Right ventricle myocardium inferior (tissue), 1 donor: ENCODE measurements at regions of chr15 and their contacts with region 1.

Region 1: DNA sequence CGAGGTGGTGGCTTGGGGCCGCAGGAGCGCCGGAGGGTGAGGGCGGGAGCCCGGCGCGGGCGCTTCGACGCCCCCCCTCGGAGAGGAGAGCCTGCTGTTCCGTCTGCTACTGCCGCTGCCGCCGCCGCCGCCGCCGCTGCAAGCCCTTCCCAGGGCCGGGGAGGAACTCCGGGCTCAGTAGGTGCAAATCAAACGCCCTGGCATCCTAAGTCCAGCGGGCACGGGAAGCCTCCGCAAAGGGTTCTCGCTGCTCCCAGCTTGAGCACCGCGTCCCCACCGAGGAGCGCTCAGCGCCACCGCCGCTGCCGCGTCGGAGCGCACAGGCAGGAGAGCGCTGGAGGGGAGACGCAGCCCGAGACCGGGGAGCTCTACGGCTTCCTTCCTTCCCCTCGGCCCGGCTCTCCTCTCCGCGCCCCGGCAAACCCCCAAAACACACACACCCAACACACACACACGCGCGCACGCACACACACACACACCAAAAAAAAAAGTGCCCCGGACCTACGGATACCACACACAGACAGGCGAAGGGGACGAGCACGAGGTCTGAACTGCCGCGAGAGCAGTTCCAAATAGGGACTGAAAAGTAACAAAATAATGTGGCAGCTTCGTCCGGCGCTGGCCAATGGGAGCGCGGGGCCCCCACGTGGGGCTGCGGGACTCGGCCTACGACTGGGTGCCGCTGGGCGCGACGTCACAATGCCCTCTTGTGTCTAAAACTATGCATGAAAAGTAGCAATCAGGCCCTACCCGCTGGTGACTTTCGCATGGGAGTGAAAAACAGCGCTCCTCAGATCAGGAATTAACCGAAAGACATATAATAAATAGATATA is at the start of gene TLE3:
- DNase-seq: peak; percentile 100
- ATAC-seq: peak; percentile 70
- total RNA-seq, gene TLE3: 14.1 TPM

Region 2: DNA sequence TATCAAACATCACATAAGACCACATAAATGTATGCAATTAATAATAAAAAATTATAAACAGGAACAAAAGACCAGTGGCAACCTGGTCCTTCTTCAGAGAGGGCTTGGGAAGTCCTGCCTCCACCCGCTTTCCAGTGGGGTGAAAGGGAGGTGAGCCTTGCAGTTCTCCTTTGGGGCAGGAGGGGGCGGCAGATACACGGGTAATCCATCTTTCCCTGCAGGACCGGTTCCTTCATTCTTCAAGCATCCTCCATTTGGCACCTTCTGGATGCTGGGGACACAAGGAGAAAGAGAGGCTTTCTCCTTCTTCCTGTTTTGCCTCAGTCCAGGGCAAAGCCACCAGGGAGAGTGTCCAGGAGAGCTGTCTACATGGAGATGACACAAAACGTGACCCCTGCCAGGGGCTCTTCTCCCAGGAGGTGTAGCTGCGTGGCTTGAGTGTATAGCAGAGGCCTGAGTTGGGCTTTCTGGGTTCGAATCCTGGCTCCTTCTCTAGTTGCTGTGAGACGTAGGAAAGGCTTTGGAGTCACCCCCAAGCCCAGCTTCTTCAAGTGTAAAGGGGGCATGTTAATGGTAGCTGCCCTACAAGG is 621.7 kb before region 1 on chr15:
- intact Hi-C with region 1: loop called (anchors 10 kb)
- DNase-seq: peak; percentile 80
- ATAC-seq: peak; percentile 80

Region 3: DNA sequence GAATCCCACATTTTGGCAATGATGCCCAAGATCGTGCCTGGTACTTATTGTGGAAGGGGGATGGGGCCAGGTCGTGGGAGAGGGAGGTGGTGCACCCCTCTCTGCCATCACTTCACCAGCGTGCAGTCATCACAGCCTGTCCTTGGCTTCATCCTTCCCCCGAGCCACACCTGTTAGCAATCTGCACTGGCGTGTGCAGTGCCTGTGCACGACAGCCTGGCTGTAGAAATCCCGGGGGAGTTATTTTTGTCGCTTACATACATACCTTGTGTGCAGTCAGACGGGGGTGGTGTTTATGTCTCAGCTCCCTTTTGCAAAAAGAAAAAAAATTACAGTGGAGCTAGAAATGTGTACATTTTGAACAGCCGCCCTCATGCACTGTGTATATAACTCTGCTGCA is 215.8 kb before region 1 on chr15:
- intact Hi-C with region 1: no loop called
- DNase-seq: no peak
- ATAC-seq: no peak

Region 4: DNA sequence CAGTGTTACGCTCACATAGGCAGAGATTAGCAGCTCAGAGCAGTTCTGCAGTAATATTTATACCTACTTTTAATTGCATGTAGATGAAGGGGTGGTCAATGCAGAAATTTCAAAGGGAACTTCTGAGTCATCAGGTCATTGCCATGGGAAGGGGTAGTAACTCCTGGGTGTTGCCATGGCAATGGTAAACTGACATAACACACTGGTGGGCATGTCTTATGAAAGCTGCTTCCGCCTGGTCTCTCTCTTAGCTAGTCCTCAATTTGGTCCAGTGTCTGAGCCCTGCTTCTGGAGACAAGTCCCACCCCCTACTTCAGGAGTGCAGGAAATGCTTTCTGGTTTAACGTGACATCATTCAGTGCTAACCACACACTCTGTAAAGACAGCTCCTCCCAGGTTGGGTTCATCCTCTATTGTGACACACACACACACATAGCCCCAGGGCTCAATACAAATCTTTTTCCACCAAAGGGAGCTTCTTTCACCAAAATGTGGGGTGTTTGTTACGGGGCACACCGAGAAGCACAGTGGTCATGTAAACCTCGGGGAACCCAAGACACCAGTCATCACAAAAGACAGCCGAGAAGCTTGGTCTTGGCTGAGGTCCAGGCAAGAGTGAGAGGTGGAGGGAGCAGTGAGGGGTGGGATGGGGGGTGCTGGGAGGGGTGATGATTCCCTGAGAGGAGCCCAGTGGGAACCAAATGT is 74.3 kb before region 1 on chr15:
- intact Hi-C with region 1: loop called (anchors 10 kb)
- DNase-seq: no peak
- ATAC-seq: no peak

Region 5: DNA sequence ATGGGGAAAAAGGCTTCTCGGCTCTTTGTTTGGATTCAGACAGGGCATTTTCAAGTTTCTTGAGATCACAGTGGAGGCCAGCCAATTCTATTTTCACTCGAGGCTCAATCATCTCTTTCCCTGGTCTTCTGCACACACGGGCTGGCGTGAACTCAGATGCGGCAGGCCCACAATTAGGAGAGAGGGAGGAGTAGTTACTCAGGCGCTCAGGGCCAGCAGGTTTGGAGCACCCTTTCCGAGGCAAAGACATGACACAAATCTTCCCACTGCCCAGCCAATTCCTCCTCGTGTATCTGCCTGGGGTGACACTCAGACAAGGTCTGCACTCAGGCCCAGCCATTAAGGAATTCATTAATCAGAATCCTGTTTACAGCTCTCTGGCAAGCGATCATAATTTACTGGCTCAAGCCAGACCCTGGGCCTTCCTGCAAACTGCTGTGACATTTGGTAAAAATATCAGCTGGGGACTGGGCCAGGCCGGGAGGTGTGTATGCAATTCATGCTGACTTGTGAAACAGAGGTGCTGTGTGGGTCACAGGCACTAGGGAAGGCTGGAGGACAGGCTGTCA is 68.2 kb after region 1 on chr15:
- intact Hi-C with region 1: loop called (anchors 5 kb)
- DNase-seq: peak; percentile 75
- ATAC-seq: peak; percentile 93

Region 6: GRCh38 chr15:70435369-70435768 is 337.8 kb after region 1 on chr15:
- intact Hi-C with region 1: loop called (anchors 5 kb)
- DNase-seq: no peak
- ATAC-seq: no peak